Activated CD4-positive, alpha-beta T cell treated with anti-CD3 and anti-CD28 coated beads, Interleukin-2, amount 10 ng/mL, durations not matched to agents 24 days and 14 days (primary cell): ENCODE measurements at regions of chr17 and their contacts with region 1.

Region 1: DNA sequence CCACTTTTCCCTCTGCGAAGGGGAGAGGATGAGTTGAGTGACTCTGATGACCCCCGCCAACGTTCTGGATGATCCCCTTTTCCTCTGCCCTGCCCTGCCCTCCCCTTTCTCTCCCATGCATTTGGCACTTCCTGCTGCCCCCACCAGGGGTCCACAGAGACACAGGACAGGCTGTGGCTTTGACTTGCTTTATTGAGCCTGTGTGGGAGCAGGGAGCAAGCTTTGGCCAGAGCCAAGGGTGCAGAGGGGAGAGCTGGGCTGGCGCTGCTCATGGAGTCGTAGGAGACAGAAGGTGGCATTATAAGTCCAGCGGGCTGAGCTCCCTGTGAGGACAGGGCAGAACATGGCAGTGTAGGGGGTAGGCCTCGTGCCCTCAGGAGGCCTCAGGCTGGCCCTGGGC is 1.6 kb downstream of the PPY start:
- DNase-seq: peak; percentile 67
- H3K4me3 Mint-ChIP-seq: no peak overlapping the region
- H3K27ac Mint-ChIP-seq: no peak overlapping the region
- H3K4me1 Mint-ChIP-seq: peaks cover 15% of the 10 kb centered on the region
- H3K27me3 Mint-ChIP-seq: peaks cover 15% of the 10 kb centered on the region

Region 2: GRCh38 chr17:43778337-43779144 is 162.1 kb before region 1 on chr17 and contains the start of gene DUSP3:
- intact Hi-C with region 1: no loop called
- DNase-seq: peak; percentile 95
- H3K4me3 Mint-ChIP-seq: peak within 1 kb of the TSS; percentile 88
- H3K27ac Mint-ChIP-seq: peak within 1 kb of the TSS; percentile 85
- H3K4me1 Mint-ChIP-seq: peaks cover 5% of the 10 kb centered on the region
- H3K27me3 Mint-ChIP-seq: peaks cover 36% of the 10 kb centered on the region
- total RNA-seq, gene DUSP3: 16.5 and 18.3 TPM in 2 replicates

Region 3: GRCh38 chr17:43907425-43907981 is 33.1 kb before region 1 on chr17 and contains the start of gene MPP2:
- intact Hi-C with region 1: no loop called
- DNase-seq: peak; percentile 78
- H3K4me3 Mint-ChIP-seq: peak within 1 kb of the TSS; percentile 53
- H3K27ac Mint-ChIP-seq: no peak within 1 kb of the TSS
- H3K4me1 Mint-ChIP-seq: peaks cover 3% of the 10 kb centered on the region
- H3K27me3 Mint-ChIP-seq: peaks cover 52% of the 10 kb centered on the region
- total RNA-seq, gene MPP2: 0.83 and 1.3 TPM in 2 replicates

Region 4: GRCh38 chr17:43994272-43995149 is 53.9 kb after region 1 on chr17:
- intact Hi-C with region 1: loop called (anchors 1 kb)
- DNase-seq: peak; percentile 91
- H3K4me3 Mint-ChIP-seq: peak overlapping the region; percentile 44
- H3K27ac Mint-ChIP-seq: no peak overlapping the region
- H3K4me1 Mint-ChIP-seq: no peaks in the 10 kb centered on the region
- H3K27me3 Mint-ChIP-seq: peaks cover 26% of the 10 kb centered on the region

Region 5: GRCh38 chr17:44044067-44044466 is 103.4 kb after region 1 on chr17:
- intact Hi-C with region 1: loop called (anchors 5 kb)
- DNase-seq: no peak
- H3K4me3 Mint-ChIP-seq: no peak overlapping the region
- H3K27ac Mint-ChIP-seq: no peak overlapping the region
- H3K4me1 Mint-ChIP-seq: peaks cover 23% of the 10 kb centered on the region
- H3K27me3 Mint-ChIP-seq: no peaks in the 10 kb centered on the region

Region 6: GRCh38 chr17:44159519-44160210 is 219.0 kb after region 1 on chr17:
- intact Hi-C with region 1: loop called (anchors 10 kb)
- DNase-seq: no peak
- H3K4me3 Mint-ChIP-seq: no peak overlapping the region
- H3K27ac Mint-ChIP-seq: no peak overlapping the region
- H3K4me1 Mint-ChIP-seq: peaks cover 2% of the 10 kb centered on the region
- H3K27me3 Mint-ChIP-seq: no peaks in the 10 kb centered on the region